Esophagus muscularis mucosa (tissue), 4 donors: ENCODE measurements at regions of chr4 and their contacts with region 1.

Region 1: DNA sequence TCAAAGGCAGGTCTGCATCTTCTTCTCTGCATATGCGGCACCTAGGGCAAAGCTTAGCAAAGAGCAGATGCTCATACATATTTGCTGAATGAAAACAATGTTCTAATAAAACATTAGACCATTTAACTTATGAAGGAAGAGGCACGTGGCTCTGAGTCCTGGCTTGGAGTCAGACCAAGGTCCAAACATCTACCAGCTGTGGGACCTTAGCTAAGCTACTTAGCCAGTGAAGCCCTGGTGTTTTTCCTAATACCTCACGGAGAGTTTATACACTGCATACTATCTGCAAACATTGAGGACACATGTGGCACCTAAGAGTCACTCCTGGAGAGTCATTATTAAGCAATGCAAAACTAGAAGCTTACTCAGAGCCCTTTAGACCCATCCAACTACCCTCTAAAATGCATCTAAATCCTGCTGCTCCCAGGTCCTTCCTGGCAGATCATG is 9.0 kb downstream of the PDGFC start:
- DNase-seq: no peak
- H3K4me3 ChIP-seq: no peak overlapping the region
- H3K27ac ChIP-seq: peak overlapping the region; percentile 62 to 74 (median 68)
- H3K4me1 ChIP-seq: peaks cover 26 to 70% (median 57%) of the 10 kb centered on the region in 4 donors
- H3K27me3 ChIP-seq: no peaks in the 10 kb centered on the region
- CTCF ChIP-seq: no peak
- EP300 ChIP-seq: no peak
- POLR2A ChIP-seq: no peak

Region 2: DNA sequence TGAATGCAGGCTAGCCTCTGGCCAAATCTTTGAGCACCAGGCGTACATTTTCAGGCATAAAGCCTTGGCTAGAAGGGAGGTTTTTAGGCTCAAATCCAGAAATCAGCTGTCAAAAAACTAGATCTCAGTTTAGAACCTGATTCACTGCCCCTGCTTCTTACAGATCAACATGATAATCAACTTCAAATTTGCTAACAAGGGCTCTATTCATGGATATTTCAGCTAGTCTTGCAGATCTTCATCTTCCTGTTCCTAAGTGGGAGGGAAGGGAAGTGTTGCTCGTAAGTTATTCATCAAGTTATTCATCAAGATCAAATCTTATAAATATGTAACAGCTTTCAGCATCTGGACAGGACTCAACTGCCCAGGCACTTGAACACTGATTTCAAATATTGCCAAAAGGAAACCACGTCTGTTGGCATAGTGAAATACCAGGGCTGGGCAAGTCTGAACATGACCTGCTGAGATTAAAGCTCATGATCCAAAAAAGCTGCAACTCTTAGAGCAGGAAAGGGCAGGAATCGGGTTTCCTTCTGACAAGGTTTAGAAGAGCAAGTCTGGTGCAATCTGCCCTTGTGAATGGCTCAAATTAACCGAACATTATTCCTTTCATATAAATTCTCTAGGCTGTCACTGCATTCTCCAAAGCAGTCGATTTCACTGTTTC is 191.2 kb before region 1 on chr4:
- intact Hi-C with region 1: loop called (anchors 5 kb)
- DNase-seq: no peak
- H3K4me3 ChIP-seq: peak overlapping the region; percentile 5 to 36 (median 26)
- H3K27ac ChIP-seq: peak overlapping the region; percentile 60 to 67 (median 64)
- H3K4me1 ChIP-seq: peaks cover 16 to 71% (median 61%) of the 10 kb centered on the region in 4 donors
- H3K27me3 ChIP-seq: no peaks in the 10 kb centered on the region
- CTCF ChIP-seq: no peak
- EP300 ChIP-seq: no peak
- POLR2A ChIP-seq: no peak